ENCODE measurements at regions of chrX and their contacts with region 1.

Region 1: DNA sequence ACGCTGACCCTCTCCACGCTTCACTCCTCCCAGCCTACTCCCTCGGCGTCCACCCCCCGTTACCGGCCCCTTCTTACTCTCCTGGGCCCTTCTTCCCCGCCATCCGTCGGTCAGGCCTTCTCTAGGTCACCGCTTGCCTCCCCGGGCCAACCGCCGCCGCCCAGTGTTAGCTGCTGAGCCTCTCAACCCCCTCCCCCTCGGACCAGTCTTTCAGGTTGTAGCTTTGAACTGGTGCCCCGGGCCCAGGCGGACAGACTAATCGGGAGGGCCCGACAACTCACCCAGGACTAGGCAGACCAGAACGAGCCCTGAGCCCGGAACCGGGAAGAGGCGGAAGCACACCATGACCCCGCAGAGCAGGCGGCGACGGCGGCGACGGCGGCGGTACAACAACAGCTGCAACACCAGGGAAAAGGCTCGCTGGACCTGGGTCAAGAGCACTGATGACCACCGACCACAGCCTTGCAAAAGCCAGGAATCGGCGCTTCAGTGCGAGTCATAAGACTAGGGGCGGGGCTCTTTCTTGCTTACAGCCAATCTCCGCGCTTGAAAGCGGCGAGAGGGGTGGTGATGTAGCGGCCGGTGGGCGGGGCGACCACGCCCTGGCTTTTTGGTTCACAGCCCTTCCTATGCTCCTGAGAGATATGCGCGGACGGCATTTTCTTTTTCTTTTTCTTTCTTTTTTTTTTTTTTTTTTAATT is at the start of gene LAMP2:
- DNase-seq: peak; percentile 94
- ATAC-seq: peak; percentile 99
- total RNA-seq, gene LAMP2: 55.7 TPM

Region 2: GRCh38 chrX:120250522-120251271 is 218.3 kb before region 1 on chrX and contains the start of gene ZBTB33:
- intact Hi-C with region 1: loop called (anchors 10 kb)
- DNase-seq: peak; percentile 94
- ATAC-seq: peak; percentile 99
- total RNA-seq, gene ZBTB33: 6.8 TPM

Region 3: GRCh38 chrX:120350450-120351138 is 118.4 kb before region 1 on chrX:
- intact Hi-C with region 1: no loop called
- DNase-seq: no peak
- ATAC-seq: no peak

Region 4: DNA sequence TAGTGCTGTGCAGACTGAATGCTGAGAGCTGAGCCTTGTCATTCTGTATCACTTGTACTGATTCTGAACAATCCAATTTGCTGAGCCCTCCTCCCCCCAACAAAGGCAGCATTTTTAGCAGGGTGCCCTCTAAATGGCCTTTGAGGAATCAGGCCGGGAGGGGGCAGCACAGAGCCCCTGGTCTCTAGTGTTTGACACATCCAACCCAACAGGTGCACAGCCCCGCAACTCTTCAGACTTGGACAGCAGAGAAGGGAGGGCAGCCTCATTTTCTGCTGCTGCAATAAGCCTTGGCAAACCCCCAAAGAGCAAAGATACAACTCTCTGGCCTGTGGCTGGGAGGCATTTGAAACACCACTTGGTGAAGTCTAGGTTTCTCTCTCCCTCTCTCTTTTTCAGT is 103.7 kb before region 1 on chrX:
- intact Hi-C with region 1: loop called (anchors 10 kb)
- DNase-seq: peak; percentile 61
- ATAC-seq: peak; percentile 26